ENCODE measurements at regions of chr3 and their contacts with region 1.

Region 1: DNA sequence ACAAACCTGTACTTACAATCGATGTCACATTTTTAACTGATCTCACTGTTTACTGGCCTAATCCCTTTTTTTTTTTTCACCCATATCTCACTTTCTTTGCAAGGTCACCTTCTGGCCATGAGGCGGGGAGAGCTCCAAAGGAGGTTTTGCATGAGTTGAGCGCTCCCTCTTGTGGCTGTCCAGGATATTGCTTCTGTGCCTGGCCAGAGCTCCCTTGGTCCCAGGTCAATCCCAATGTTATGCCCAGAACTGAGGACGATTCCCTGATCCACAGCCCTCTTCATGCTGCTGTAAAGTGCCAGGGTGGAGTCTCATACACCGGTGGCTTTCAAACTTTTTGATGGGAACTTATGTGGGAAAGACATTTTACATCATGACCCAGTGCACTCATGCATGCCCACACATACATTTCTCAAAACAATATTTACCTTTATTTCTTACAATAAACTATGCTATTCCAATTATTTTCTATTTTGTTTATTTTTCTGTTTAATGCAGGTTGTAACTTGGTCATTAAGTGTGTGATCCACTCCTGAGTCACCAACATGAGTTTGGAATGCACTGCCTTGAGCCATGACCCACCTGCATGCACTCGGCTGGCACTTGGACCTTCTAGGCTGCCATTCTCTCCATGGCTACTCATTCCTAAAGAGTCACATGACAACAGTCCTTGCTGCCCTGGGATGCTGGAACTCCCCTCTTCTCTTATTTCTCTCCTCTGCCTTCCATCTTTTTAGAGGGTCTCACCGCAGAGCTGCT is 9.6 kb upstream of the SST start:
- DNase-seq: peak; percentile 81
- ATAC-seq: peak; percentile 91 to 96

Region 2: GRCh38 chr3:187227658-187228258 is 452.1 kb before region 1 on chr3:
- intact Hi-C with region 1: loop called in 1 of 2 experiments (anchors 10 kb)
- DNase-seq: no peak
- ATAC-seq: peak in 1 of 2 donors; percentile 71

Region 3: GRCh38 chr3:187319699-187320302 is 360.0 kb before region 1 on chr3:
- intact Hi-C with region 1: loop called (anchors 1 to 2 kb)
- DNase-seq: peak; percentile 75
- ATAC-seq: peak; percentile 91 to 97

Region 4: GRCh38 chr3:187616307-187616972 is 63.4 kb before region 1 on chr3:
- intact Hi-C with region 1: loop called (anchors 5 to 10 kb)
- DNase-seq: peak; percentile 37
- ATAC-seq: peak in 1 of 2 donors; percentile 43

Region 5: DNA sequence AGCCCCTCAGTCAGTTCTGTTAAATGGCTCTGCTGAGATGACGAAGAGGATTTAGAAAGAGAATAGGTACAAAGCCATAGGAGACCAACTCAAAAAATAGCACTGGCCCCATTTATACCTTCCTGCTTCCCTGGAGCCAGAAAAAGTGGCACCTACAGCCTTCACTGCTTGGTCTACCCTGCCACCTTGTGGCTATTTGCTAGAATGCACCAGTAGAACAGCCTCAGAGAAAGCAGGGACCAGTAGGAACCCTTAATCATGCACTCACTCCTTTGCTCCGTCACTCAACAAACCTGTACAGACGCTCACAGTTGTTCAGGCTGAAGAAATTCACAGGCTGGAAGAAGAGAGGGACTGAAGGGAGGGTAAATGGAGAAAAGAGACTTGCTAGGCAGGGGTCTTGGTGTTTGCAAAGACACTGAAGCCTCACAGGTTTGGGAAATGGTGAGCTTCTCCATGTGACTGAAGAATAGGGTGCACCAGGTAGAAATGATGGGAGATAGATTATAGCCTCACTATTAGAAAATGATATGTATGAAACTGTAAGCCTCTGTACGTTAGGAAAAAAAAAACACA is 34.7 kb after region 1 on chr3:
- intact Hi-C with region 1: loop called (anchors 2 to 5 kb)
- DNase-seq: peak; percentile 58
- ATAC-seq: peak; percentile 87 to 93

Region 6: DNA sequence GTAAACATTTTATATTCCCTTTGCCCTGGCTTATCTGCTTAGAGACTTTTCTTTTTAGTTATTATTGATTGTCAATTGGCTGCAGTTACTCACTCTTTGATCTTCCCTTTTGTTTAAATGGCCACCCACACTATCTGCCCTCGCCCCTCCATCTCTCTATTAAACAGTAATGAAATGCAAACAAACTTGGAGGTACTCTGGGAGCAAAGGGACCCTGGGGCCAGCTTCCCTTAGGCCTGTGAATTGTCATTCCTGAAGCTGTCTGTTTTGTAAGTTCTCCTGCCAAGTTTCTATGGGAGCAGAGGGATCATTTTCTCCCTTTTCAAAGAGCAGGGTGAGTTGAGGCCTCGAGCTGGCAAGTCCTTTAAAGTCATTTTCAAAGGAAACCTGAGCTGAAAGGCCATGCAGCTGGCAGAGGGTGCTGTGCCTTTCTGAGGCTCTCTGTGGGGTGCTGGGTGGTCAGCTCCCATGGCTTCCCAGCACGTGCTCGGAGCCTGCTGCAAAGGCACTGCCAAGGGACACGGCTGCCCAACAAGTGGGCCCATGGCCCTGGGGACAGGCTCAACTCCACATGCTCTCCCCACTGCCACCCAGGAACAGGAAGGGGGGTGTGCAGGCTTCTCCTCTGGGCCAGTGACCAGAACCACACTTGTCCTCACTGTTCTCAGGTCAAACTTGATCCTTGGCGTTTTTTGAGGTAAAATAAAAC is 40.0 kb after region 1 on chr3:
- intact Hi-C with region 1: loop called (anchors 2 to 5 kb)
- DNase-seq: no peak
- ATAC-seq: peak; percentile 27 to 84

Measured in left cardiac atrium (tissue), 4 donors.